Head of caudate nucleus (tissue), 42 donors: ENCODE measurements at regions of chr5 and their contacts with region 1.

Region 1: DNA sequence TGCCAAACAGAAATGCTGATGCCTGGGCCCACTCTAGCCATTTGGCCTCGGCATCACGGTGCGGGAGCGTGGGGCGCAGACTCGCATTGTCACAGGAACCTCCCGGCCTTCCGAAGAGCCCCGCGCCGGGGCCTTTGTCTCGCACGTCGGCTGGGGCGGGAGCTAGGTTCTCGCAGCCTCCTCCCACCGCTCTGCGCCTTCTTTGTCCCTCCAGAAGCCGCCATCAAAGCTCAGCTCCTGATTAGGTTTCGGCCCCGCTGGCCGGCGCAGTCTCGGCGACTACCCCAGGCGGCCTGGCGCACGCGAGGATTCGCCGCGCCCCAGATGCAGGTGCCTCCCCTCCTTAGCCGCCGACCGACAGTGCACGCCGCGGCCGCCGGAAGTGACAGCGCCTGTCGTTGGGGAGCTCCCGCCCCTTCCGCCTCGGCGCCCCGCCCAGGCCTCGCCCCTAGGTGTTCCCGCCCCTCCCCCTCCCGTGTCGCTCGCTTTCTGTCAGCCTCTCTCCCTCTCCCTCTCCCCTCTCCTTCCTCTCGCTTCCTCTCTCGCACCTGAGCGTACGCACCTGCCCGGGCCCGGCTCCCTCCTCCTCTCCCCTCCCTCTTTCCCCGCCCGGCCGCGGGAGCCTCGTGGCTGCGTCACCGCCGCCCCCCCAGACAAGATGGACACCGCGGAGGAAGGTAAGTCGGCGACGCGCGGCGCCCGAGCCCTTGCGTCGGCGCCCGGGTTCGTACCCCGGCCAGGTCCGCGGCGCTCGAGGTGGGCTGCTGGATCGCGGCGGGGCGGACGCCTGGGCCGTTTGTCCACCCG is at the start of gene MARCHF6:
- DNase-seq: peak; percentile 86 to 98 (median 94)

Region 2: GRCh38 chr5:10249948-10250803 is 103.3 kb before region 1 on chr5 and contains the start of gene CCT5:
- intact Hi-C with region 1: loop called (anchors 2 kb)
- DNase-seq: peak; percentile 78 to 96 (median 90)

Region 3: DNA sequence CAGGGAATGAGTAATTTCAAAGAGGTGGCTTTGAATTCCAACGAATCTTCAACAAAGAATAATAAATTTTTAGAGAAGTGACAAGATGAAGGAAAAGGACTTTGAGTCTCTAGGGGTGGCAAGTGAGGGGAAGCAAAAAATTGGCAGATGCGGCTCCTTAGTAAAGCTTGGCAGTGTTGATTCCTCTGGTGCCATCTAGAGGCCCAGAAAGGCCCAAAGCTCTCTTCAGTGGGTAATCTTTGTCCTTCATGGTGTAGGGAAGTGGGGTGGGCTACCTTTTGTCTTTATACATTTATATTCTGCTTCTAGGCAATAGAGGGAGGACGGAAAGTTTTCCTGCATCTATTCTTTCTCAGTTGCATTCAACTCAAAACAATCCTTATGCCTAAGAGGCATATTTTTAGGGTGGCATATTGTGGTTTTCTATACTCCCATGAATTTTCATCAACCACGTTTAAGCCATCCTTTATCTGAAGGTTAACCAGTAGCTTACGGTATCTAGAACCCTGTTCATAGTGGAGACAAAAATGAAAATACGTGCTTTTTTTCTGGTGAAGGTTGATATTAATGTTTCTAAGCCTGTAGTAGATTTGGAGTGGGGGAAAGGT is 70.8 kb after region 1 on chr5:
- intact Hi-C with region 1: loop called (anchors 5 kb)
- DNase-seq: peak in 37 of 42 donors; percentile 23 to 83 (median 58)